Esophagus muscularis mucosa (tissue), 4 donors: ENCODE measurements at regions of chr20 and their contacts with region 1.

Region 1: DNA sequence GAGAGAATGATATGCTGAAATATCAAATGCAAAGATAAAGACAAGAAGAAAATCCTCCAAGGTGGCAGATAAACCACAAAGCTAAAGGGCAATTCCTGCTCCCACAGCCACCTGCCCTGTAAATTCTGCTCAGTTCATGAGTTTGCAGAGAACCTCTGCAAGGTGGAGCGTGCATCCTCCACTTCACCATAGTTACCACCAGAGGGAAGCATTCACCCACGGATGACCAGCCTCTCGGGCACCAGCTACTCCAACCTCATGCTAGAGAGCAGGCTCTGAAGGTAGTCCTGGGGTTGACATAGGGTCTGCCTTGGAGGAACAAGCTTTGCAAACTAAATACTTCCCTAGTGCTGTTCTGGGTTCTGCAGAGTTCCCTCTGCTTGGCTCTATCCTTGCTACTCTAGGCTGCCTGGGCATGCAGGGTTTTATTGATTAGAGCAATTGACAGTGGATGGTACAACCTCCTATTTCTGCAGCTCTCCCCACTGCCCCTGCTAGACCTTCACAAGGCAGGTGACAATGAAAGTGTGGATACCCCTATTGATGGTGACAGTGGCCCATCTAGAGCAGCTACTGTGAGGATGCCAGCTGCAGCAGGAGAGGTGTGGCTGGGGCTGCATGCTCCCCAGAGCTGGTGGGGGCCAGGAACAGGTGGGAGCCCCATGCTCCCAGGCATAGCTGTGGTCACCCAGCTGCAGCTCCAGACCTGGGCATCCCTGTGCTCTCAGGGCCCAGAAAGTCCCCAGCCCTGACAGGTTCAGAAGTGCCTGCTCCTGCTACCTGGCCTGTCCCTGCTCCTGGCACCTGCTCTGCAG is 51.1 kb downstream of the GGTLC1 start:
- DNase-seq: peak; percentile 90
- H3K4me3 ChIP-seq: no peak overlapping the region
- H3K27ac ChIP-seq: no peak overlapping the region
- H3K4me1 ChIP-seq: peaks cover 0 to 3% (median 0%) of the 10 kb centered on the region in 4 donors
- H3K27me3 ChIP-seq: peaks cover 0 to 8% (median 0%) of the 10 kb centered on the region in 4 donors
- CTCF ChIP-seq: peak; percentile 70 to 79 (median 78)
- EP300 ChIP-seq: no peak
- POLR2A ChIP-seq: no peak

Region 2: GRCh38 chr20:23794841-23795240 is 142.7 kb before region 1 on chr20:
- intact Hi-C with region 1: loop called (anchors 5 kb)
- DNase-seq: no peak
- H3K4me3 ChIP-seq: no peak overlapping the region
- H3K27ac ChIP-seq: no peak overlapping the region
- H3K4me1 ChIP-seq: peaks cover 0 to 5% (median 0%) of the 10 kb centered on the region in 4 donors
- H3K27me3 ChIP-seq: peaks cover 0 to 5% (median 0%) of the 10 kb centered on the region in 4 donors
- CTCF ChIP-seq: no peak
- EP300 ChIP-seq: no peak
- POLR2A ChIP-seq: no peak

Region 3: GRCh38 chr20:23988561-23988960 is 51.1 kb after region 1 on chr20 and contains the start of gene GGTLC1:
- intact Hi-C with region 1: loop called (anchors 5 kb)
- DNase-seq: no peak
- H3K4me3 ChIP-seq: no peak within 1 kb of the TSS
- H3K27ac ChIP-seq: no peak within 1 kb of the TSS
- H3K4me1 ChIP-seq: no peaks in the 10 kb centered on the region
- H3K27me3 ChIP-seq: no peaks in the 10 kb centered on the region
- CTCF ChIP-seq: no peak
- EP300 ChIP-seq: no peak
- POLR2A ChIP-seq: no peak
- total RNA-seq, gene GGTLC1: not detected